ENCODE measurements at regions of chr7 and their contacts with region 1.

Region 1: GRCh38 chr7:118311121-118311803 is 86.8 kb downstream of the ANKRD7 start:
- DNase-seq: no peak
- H3K4me3 Mint-ChIP-seq: no peak overlapping the region
- H3K27ac Mint-ChIP-seq: peak overlapping the region; percentile 75
- H3K4me1 Mint-ChIP-seq: peaks cover 33% of the 10 kb centered on the region
- H3K27me3 Mint-ChIP-seq: peaks cover 5% of the 10 kb centered on the region

Region 2: DNA sequence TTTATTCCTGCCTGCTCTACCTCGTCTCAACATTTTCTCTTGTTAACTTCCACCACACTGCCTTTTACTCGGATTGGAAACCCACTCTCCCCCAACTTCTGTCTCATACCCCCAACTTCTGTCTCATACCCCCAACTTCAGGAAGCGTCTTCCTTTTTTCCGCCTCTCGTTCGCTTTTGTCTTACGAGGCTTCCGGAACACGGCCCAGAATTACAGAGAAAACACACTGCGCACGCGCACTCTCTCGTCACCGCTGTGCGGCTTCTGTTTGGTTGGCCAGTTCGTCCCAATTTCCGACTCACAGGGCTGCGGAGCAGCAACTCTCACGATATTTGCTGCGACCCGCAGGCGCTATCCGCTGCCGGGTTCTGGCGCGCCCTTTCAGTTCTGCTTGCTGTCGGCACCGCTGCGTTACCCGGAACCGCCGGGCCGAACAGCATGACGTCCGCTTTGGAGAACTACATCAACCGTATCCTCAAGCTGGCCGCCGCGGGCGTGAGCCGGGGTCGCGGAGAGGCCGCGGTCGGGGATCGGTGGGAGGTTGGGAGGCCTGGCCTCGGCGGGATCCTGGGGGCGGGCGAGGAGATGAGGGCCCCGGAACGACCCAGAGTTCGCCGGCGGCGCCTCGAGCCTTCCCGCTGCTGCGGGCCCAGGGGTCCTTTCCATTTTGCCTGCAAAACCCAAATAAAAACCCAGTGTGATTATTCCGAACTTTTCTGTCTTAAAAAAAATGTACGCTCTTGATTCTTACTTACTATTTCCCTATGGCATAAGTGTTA is 127.3 kb before region 1 on chr7 and contains the start of gene LSM8:
- intact Hi-C with region 1: loop called (anchors 5 kb)
- DNase-seq: peak; percentile 97
- H3K4me3 Mint-ChIP-seq: peak within 1 kb of the TSS; percentile 99
- H3K27ac Mint-ChIP-seq: peak within 1 kb of the TSS; percentile 100
- H3K4me1 Mint-ChIP-seq: peaks cover 30% of the 10 kb centered on the region
- H3K27me3 Mint-ChIP-seq: no peaks in the 10 kb centered on the region
- total RNA-seq, gene LSM8: 46.8 and 50.3 TPM in 2 replicates

Region 3: GRCh38 chr7:118288098-118288497 is 23.2 kb before region 1 on chr7:
- intact Hi-C with region 1: loop called (anchors 1 kb)
- DNase-seq: no peak
- H3K4me3 Mint-ChIP-seq: peak overlapping the region; percentile 0
- H3K27ac Mint-ChIP-seq: peak overlapping the region; percentile 37
- H3K4me1 Mint-ChIP-seq: peaks cover 24% of the 10 kb centered on the region
- H3K27me3 Mint-ChIP-seq: peaks cover 19% of the 10 kb centered on the region

Region 4: GRCh38 chr7:118352854-118353453 is 41.7 kb after region 1 on chr7:
- intact Hi-C with region 1: loop called (anchors 1 kb)
- DNase-seq: no peak
- H3K4me3 Mint-ChIP-seq: no peak overlapping the region
- H3K27ac Mint-ChIP-seq: no peak overlapping the region
- H3K4me1 Mint-ChIP-seq: peaks cover 12% of the 10 kb centered on the region
- H3K27me3 Mint-ChIP-seq: no peaks in the 10 kb centered on the region